T-cell (primary cell): ENCODE measurements at regions of chr2 and their contacts with region 1.

Region 1: DNA sequence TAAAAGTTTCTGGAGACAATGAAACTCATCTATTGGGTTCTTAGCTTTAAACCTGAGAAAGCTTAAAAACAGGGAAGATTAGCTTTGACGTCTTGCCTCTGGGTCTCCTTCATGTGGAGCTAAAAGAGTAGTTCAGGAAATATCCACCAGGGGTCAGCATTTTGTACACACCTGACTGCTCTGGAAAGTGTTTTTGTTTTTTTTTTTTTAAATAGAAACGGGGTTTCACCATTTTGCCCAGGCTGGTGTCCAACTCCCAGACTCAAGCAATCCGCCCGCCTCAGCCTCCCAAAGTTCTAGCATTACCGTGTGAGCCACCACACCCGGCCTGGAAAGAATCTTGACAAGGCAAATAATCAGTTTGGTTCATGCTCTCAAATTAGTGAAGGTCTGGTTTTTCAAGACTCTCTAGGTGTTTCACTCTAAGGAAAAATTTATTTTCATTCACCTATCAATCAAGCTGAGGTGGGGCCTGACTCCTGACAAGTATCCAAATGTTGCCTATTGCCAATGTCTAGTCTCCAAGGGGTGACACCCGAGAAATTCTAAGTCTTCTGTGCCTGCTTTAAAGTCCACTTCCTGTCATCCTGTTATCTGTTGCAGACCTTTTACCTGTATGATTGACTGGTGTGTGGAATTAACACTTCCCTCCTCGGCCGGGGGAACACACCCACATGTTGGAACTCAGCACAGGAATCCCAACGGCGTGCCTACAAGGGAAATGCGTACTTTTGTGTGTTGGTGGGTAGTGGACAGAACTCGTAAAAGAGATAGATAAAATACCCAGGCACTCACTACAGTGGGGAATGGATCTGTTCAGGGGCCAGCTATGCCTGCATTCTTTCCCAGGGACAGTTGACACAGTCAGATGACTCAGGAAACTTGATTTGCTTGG is 11.3 kb downstream of the IL1RN start:
- DNase-seq: peak in 26 of 35 experiments; percentile 9 to 92 (median 43)
- ATAC-seq: peak; percentile 69 to 88 (median 76)
- H3K4me3 ChIP-seq: peak overlapping the region in 1 of 2 donors; percentile 30
- H3K4me3 Mint-ChIP-seq: peak overlapping the region; percentile 54 to 60 (median 54)
- H3K27ac ChIP-seq: peak overlapping the region; percentile 41
- H3K27ac Mint-ChIP-seq: peak overlapping the region; percentile 71 to 86
- H3K4me1 ChIP-seq: peaks cover 7 to 14% of the 10 kb centered on the region in 2 experiments
- H3K4me1 Mint-ChIP-seq: peaks cover 18 to 27% (median 18%) of the 10 kb centered on the region in 3 donors
- H3K27me3 ChIP-seq: no peaks in the 10 kb centered on the region
- H3K27me3 Mint-ChIP-seq: no peaks in the 10 kb centered on the region

Region 2: GRCh38 chr2:113167115-113167932 is 28.6 kb after region 1 on chr2:
- CTCF ChIA-PET with region 1: interaction called, 7 to 99 read pairs
- POLR2A ChIA-PET with region 1: interaction called in 1 of 2 experiments, 3 read pairs
- DNase-seq: peak in 10 of 35 experiments; percentile 16 to 61 (median 38)
- ATAC-seq: peak; percentile 65 to 70 (median 68)
- H3K4me3 ChIP-seq: no peak overlapping the region
- H3K4me3 Mint-ChIP-seq: peak overlapping the region; percentile 62 to 70 (median 63)
- H3K27ac ChIP-seq: peak overlapping the region; percentile 85
- H3K27ac Mint-ChIP-seq: peak overlapping the region; percentile 96 to 100
- H3K4me1 ChIP-seq: peaks cover 44 to 57% of the 10 kb centered on the region in 2 experiments
- H3K4me1 Mint-ChIP-seq: peaks cover 78 to 83% (median 79%) of the 10 kb centered on the region in 3 donors
- H3K27me3 ChIP-seq: no peaks in the 10 kb centered on the region
- H3K27me3 Mint-ChIP-seq: no peaks in the 10 kb centered on the region

Region 3: DNA sequence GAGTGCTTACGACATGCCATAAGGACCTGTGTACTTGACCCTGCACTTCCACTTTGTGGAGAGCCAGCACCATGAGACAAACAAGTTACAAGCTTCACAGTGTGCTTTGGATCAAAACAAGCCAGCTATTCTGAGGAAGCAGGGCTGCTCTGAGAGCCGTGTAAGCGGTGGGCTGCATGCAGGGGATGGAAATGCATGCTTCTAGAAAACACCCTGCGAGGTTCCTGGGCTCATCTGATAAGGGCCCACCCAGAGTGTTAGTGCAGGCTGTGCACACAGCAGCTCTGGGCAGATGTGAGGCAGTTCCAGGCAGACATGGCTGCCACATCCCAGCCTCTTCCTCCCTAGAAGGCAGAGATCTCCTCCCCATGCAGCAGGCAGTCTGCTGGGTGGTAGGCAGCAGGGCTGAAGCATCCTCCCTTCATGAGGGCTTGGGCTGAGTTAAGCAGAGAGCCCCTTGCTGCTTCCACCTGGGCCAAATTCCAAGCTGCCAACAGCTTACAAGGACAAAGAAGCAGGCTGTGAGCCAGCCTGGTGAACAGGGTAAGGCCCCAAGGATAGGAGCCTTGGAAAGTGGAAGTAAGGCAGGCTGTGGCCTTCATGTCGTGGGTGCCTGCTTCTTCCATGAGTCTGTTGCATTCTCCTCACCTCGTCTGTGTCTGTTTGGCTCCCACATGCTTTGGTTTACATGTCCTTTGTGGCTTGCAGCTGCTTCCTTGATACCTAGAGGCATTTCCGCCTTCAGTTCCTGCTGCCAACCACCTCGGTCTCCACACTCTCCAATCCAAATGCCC is 42.8 kb after region 1 on chr2:
- CTCF ChIA-PET with region 1: interaction called, 16 to 99 read pairs
- POLR2A ChIA-PET with region 1: no interaction called
- DNase-seq: peak in 2 of 35 experiments; percentile 31 to 46
- ATAC-seq: peak; percentile 44 to 64 (median 52)
- H3K4me3 ChIP-seq: peak overlapping the region; percentile 4 to 52
- H3K4me3 Mint-ChIP-seq: peak overlapping the region; percentile 52 to 86 (median 60)
- H3K27ac ChIP-seq: peak overlapping the region; percentile 49
- H3K27ac Mint-ChIP-seq: peak overlapping the region; percentile 91 to 96
- H3K4me1 ChIP-seq: peaks cover 64 to 98% of the 10 kb centered on the region in 2 experiments
- H3K4me1 Mint-ChIP-seq: peaks cover 96 to 99% (median 96%) of the 10 kb centered on the region in 3 donors
- H3K27me3 ChIP-seq: no peaks in the 10 kb centered on the region
- H3K27me3 Mint-ChIP-seq: no peaks in the 10 kb centered on the region

Region 4: GRCh38 chr2:113203901-113204519 is 65.3 kb after region 1 on chr2:
- CTCF ChIA-PET with region 1: interaction called, 34 to 73 read pairs
- POLR2A ChIA-PET with region 1: interaction called in 1 of 2 experiments, 3 read pairs
- DNase-seq: peak; percentile 52 to 87 (median 71)
- ATAC-seq: peak; percentile 83 to 91 (median 84)
- H3K4me3 ChIP-seq: no peak overlapping the region
- H3K4me3 Mint-ChIP-seq: peak overlapping the region in 1 of 3 donors; percentile 40
- H3K27ac ChIP-seq: peak overlapping the region; percentile 67
- H3K27ac Mint-ChIP-seq: peak overlapping the region; percentile 93 to 95
- H3K4me1 ChIP-seq: peaks cover 0 to 21% of the 10 kb centered on the region in 2 experiments
- H3K4me1 Mint-ChIP-seq: peaks cover 18 to 35% (median 26%) of the 10 kb centered on the region in 3 donors
- H3K27me3 ChIP-seq: no peaks in the 10 kb centered on the region
- H3K27me3 Mint-ChIP-seq: no peaks in the 10 kb centered on the region

Region 5: DNA sequence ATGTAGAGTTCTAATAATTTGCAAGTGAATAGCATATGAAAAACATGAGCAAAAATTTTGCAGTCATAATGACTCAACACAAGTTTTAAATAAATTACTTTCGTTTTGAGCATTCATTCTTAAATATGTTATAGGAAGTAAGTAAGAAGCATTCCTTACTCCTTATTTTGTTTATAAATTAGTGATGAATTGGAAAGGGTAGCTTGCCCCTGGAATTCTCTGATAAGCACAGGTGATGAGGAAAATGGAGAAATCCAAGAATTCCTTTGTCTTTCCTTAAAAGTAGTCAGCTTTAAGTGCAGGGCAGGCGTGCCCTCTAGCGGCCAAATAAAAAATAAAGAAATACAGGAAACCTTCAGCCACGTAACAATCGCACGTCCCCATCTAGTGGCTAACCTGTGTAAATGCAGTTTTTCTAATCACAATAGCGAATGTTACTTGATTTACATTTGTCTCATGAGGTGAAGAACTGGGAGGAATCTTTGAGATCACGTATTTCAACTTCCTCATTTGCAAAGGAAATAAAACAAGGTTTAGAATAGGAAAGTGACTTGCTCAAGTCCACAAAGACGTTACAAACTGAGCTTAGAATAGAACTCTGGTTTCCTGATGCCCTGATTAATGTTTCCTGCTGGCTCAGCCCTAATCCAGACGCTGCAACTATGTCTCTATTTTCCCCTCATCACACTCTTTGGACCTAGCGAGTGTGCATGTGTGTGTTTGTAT is 251.6 kb after region 1 on chr2:
- CTCF ChIA-PET with region 1: interaction called, 8 to 25 read pairs
- POLR2A ChIA-PET with region 1: no interaction called
- DNase-seq: peak; percentile 8 to 86 (median 44)
- ATAC-seq: peak; percentile 87 to 97 (median 90)
- H3K4me3 ChIP-seq: peak overlapping the region in 1 of 2 donors; percentile 40
- H3K4me3 Mint-ChIP-seq: peak overlapping the region; percentile 71 to 74 (median 73)
- H3K27ac ChIP-seq: no peak overlapping the region
- H3K27ac Mint-ChIP-seq: peak overlapping the region; percentile 73 to 78
- H3K4me1 ChIP-seq: peaks cover 2 to 4% of the 10 kb centered on the region in 2 experiments
- H3K4me1 Mint-ChIP-seq: peaks cover 6 to 15% (median 9%) of the 10 kb centered on the region in 3 donors
- H3K27me3 ChIP-seq: no peaks in the 10 kb centered on the region
- H3K27me3 Mint-ChIP-seq: peaks cover 7 to 15% of the 10 kb centered on the region in 2 donors